GM18951 (cell line): ENCODE measurements at regions of chr20 and their contacts with region 1.

Region 1: DNA sequence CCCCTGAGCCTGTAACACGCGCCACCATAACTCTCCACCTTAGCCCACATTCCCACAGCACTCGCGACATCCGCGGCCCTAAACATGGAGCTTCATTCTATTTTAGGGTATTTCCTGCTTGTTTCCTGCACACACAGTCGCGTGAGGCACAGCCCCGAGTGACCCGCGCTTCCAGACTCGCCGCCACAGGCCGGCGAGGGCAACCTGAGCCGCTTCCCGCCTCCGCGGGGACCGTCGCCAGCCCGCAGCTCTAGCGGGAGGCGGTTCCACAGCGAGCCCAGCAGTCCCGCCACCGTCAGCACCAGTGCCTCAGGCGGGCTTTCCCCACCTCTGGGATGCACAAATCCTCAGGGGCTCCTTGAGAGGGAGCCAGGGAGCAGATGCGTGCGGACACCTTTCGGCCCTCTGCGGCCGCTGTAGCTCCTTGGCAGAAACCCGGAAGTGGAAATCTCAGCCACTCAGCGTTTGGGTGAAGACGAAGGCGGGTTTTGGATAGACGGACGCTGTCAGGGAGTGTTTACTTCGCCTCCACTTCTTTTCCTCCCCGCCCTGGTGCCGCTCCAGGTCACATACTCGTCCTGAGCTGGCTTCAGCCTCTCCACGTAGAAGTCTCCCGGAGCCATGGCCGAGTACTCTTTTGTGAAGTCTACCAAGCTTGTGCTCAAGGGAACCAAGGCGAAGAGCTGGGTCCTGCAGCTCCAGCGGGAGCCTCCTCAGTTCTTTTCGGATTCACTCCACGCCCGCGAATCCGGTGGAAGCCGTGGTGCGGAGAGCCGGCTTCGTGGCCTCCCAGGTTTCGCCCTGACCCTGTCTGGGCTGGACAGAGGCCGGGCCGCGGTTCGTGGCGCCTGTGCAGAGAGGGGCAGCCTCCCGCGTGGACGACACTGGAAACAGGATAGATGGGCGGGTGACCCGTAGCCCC is 2177.4 kb upstream of the DEFB115 start:
- POLR2A ChIP-seq: no peak

Region 2: DNA sequence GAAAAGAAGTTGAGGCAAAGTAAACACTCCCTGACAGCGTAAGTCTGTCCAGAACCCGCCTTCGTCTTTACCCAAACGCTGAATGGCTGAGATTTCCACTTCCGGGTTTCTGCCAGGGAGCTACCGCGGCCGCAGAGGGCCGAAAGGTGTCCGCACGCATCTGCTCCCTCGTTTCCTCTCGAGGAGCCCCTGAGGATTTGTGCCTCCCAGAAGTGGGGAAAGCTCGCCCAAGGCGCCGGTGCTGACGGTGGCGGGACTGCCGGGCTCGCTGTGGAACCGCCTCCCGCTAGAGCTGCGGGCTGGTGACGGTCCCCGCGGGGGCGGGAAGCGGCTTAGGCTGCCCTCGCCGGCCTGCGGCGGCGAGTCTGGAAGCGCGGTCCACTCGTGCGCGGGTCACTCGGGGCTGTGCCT is 417.2 kb after region 1 on chr20:
- in situ Hi-C with region 1: loop called (anchors 5 kb)
- POLR2A ChIP-seq: no peak